ENCODE measurements at regions of chr19 and their contacts with region 1.

Region 1: DNA sequence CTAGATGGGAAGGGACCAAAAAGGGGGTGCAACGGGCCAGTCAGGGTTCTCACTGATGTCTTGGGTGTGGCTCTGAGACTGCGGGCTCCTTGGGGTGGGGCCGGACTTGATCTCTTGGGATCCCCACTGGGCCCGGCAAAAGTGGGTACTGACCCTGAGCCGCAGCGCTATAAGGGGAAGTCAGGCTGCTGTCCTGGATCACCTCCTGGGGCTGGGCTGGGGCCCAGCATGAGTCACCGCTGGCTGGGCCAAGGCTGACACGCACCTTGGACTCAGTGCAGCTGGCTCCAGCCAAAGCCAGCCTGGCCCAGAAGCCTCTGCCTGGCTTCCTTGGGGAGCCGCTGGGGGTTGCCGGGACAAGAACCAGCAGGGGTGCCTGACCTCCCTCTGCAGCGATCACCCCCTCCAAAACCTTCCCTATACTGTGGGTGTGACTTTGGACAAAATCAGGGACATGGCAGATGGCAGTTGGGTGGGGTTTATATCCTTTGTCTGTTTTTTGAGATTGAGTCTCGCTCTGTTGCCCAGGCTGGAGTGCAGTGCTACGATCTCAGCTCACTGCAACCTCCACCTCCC is 617 bp upstream of the IQCN start:
- DNase-seq: peak; percentile 89
- ATAC-seq: peak; percentile 85
- H3K4me3 ChIP-seq: no peak overlapping the region
- H3K27ac ChIP-seq: peak overlapping the region; percentile 71
- H3K4me1 ChIP-seq: peaks cover 23% of the 10 kb centered on the region
- H3K27me3 ChIP-seq: no peaks in the 10 kb centered on the region
- CTCF ChIP-seq: no peak

Region 2: DNA sequence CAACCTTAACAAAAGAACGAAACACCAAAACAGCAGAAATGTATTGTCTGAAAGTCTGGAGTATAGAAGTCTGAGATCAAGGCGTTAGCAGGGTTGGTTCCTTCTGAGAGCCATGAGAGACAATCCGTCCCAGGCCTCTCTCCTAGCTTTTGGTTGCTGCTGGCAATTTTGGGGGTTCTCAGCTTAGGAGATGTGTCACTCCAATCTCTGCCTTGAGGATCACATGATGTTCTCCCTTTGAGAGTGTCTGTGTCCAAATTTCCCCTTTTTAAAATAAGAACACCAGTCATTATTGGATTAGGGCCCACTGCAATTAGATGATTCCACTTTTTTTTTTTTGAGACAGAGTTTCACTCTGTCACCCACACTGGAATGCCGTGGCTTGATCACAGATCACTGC is 297.8 kb before region 1 on chr19:
- CTCF ChIA-PET with region 1: no interaction called
- POLR2A ChIA-PET with region 1: no interaction called
- intact Hi-C with region 1: no loop called
- DNase-seq: no peak
- ATAC-seq: no peak
- H3K4me3 ChIP-seq: no peak overlapping the region
- H3K27ac ChIP-seq: no peak overlapping the region
- H3K4me1 ChIP-seq: no peaks in the 10 kb centered on the region
- H3K27me3 ChIP-seq: no peaks in the 10 kb centered on the region
- CTCF ChIP-seq: no peak

Region 3: GRCh38 chr19:18021121-18021755 is 253.6 kb before region 1 on chr19:
- CTCF ChIA-PET with region 1: no interaction called
- POLR2A ChIA-PET with region 1: no interaction called
- intact Hi-C with region 1: no loop called
- DNase-seq: peak; percentile 80
- ATAC-seq: peak; percentile 87
- H3K4me3 ChIP-seq: no peak overlapping the region
- H3K27ac ChIP-seq: peak overlapping the region; percentile 45
- H3K4me1 ChIP-seq: peaks cover 12% of the 10 kb centered on the region
- H3K27me3 ChIP-seq: no peaks in the 10 kb centered on the region
- CTCF ChIP-seq: no peak

Region 4: DNA sequence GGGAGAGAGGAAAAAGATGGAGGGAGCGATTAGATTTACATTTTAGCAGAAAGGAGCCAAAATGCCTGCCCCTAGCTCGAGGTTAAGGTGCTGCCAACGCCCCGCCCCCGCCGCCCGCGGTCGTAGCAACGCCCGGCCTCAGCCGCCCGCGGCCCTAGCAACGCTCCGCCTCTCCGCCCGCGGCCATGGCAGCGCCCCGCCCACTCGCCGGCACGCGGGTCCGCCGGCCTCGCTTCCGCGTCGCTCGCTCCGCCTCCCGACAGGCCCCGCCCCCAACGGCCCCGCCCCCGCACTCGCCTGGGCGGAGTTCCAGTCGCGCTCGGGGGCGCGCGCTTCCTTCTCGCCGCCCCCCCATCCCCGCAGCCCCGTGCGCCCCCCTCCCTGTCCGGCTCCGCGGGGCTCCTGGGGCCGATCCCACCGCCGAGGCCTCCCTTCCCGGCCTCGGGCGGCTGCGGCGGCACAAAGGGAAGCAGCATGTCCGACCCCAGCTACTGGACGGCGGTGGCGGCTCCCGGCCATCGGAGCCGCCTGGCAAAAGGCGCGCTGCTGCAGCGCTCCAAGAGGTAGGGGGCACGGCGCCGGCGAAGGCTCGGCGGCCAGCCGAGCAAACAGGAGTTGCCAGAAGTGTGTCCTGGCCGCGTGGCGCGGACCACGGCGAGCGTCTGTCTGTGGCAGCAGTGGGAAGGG is 157.0 kb before region 1 on chr19:
- CTCF ChIA-PET with region 1: no interaction called
- POLR2A ChIA-PET with region 1: no interaction called
- intact Hi-C with region 1: no loop called
- DNase-seq: peak; percentile 82
- ATAC-seq: peak; percentile 82
- H3K4me3 ChIP-seq: peak overlapping the region; percentile 89
- H3K27ac ChIP-seq: no peak overlapping the region
- H3K4me1 ChIP-seq: peaks cover 16% of the 10 kb centered on the region
- H3K27me3 ChIP-seq: no peaks in the 10 kb centered on the region
- CTCF ChIP-seq: no peak

Region 5: GRCh38 chr19:18192673-18193387 is 82.0 kb before region 1 on chr19 and contains the start of gene MPV17L2:
- CTCF ChIA-PET with region 1: interaction called, 5 read pairs
- POLR2A ChIA-PET with region 1: interaction called, 22 read pairs
- intact Hi-C with region 1: no loop called
- DNase-seq: peak; percentile 99
- ATAC-seq: peak; percentile 90
- H3K4me3 ChIP-seq: peak within 1 kb of the TSS; percentile 85
- H3K27ac ChIP-seq: peak within 1 kb of the TSS; percentile 26
- H3K4me1 ChIP-seq: peaks cover 13% of the 10 kb centered on the region
- H3K27me3 ChIP-seq: no peaks in the 10 kb centered on the region
- CTCF ChIP-seq: no peak
- total RNA-seq, gene MPV17L2: 34.2 and 44.7 TPM in 2 replicates

Measured in PC-3 (cell line).